HEK293 (cell line): ENCODE measurements at regions of chr5 and their contacts with region 1.

Region 1: DNA sequence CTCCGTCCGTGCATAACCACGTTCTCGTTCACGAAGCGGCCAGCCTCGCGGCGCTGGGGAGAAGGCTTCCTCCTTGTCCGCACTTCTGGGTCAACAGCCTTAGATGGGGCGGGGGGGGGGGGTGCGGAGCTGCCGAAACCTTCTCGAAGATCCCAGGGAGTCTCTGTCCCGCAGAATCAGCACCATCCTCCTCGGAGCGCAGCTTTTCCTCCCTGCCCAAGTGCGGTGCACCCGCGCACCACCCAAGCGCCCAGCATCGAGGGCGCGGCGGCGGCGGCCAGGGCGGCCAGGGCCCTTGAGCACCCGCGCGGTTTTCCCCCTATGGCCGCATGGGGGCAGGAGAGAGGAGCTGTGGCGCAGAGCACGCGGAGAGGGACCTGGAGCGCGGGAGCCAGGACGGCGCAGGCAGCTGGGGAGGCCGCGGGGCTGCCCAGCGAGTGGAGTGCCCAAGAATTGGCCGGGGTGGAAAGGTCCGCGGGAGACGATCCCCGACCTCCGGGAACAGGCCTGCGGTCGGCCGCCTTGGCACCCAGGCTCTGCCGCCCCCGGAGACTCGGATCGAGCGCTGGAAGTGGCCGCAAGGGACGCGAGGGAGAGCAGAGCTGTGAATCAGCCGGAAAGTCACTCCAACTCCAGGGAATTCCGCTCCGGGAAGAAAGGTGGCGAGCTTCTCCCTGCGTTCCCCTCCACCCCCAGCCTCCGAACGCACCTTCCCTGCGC is 43.1 kb downstream of the TMEM174 start:
- H3K4me3 ChIP-seq: peak overlapping the region; percentile 53
- H3K27ac ChIP-seq: peak overlapping the region; percentile 80; the same call in 1 of the 2 replicates
- H3K4me1 ChIP-seq: peaks cover 11% of the 10 kb centered on the region
- CTCF ChIP-seq: peak; percentile 99

Region 2: DNA sequence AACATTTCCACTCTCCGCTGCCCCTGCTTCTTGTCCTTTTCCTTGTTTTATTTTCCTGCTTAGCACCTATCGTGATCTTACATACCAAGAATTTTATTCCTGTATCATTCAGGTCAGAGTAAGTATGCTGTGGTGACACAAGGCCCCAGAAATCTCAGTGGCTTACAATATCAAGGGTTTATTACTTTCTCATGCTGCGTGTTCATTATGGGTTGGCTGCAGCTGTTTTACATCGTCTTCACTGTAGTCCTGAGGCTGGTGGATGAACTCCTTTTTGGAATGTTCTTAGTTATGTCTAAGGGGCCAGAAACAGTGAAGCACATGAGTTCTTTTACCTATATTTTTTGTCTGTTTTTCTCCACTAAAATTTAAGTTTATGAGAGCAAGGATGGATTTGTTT is 209.0 kb before region 1 on chr5:
- CTCF ChIA-PET with region 1: no interaction called
- POLR2A ChIA-PET with region 1: no interaction called
- H3K4me3 ChIP-seq: no peak overlapping the region
- H3K27ac ChIP-seq: no peak overlapping the region
- H3K4me1 ChIP-seq: no peaks in the 10 kb centered on the region
- CTCF ChIP-seq: no peak

Region 3: GRCh38 chr5:73158313-73158712 is 57.7 kb before region 1 on chr5:
- CTCF ChIA-PET with region 1: no interaction called
- POLR2A ChIA-PET with region 1: no interaction called
- H3K4me3 ChIP-seq: no peak overlapping the region
- H3K27ac ChIP-seq: no peak overlapping the region
- H3K4me1 ChIP-seq: no peaks in the 10 kb centered on the region
- CTCF ChIP-seq: no peak

Region 4: GRCh38 chr5:73170522-73170921 is 45.5 kb before region 1 on chr5:
- CTCF ChIA-PET with region 1: interaction called, 12 read pairs
- POLR2A ChIA-PET with region 1: no interaction called
- H3K4me3 ChIP-seq: no peak overlapping the region
- H3K27ac ChIP-seq: no peak overlapping the region
- H3K4me1 ChIP-seq: no peaks in the 10 kb centered on the region
- CTCF ChIP-seq: no peak

Region 5: DNA sequence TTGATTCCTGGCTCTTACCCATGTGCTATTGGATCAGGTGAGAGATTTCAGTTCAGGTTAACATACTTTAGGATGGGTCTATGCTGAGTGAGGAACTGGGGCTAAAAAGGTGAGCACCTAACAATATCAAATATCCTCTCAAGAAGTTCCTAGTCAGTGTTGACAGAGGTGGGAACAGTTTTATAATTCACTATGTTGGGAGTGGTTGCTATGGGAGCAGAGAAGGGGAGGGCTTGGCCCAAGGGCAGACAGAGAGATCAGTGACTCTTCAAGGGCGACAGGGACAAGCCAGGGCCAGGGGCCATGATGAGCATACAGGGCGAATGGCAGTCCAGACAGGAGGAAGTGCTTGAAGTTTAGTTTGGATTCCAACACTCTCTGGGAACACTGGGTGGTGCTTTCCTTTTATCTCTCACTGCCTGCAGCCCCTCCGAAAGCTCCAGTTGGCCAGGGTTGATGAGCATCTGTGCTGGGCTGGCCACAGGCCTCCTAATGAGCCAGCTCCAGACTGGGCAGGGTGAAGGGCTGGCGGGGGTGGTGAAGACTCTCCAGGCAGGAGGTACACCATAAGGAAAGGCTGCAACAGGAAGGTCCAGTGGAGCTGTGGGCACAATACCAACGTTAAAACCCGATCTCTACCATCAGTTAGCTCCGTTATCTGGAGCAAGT is 68.2 kb after region 1 on chr5:
- CTCF ChIA-PET with region 1: interaction called, 13 read pairs
- POLR2A ChIA-PET with region 1: interaction called, 4 read pairs
- H3K4me3 ChIP-seq: no peak overlapping the region
- H3K27ac ChIP-seq: no peak overlapping the region
- H3K4me1 ChIP-seq: peaks cover 27% of the 10 kb centered on the region
- CTCF ChIP-seq: no peak

Region 6: DNA sequence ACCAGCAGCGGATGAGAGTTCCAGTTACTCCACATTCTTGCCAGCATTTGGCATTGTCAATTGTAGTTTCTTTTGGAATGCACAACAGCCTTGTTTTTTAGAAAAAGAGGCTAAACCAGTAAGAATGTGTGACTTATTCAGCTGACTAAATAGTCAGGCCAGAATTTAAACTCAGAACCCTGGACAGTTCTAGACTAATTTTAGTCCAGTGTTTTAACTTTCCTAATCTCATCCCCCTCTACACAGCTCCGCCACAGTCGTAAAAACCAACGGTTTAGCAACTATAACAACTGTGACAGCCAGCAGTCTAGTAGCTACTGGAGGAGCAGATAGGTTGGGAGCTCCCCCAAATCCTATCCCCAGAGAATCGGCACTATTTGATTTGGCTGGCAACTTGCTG is 128.8 kb after region 1 on chr5:
- CTCF ChIA-PET with region 1: interaction called, 12 read pairs
- POLR2A ChIA-PET with region 1: no interaction called
- H3K4me3 ChIP-seq: no peak overlapping the region
- H3K27ac ChIP-seq: no peak overlapping the region
- H3K4me1 ChIP-seq: no peaks in the 10 kb centered on the region
- CTCF ChIP-seq: no peak

Region 7: DNA sequence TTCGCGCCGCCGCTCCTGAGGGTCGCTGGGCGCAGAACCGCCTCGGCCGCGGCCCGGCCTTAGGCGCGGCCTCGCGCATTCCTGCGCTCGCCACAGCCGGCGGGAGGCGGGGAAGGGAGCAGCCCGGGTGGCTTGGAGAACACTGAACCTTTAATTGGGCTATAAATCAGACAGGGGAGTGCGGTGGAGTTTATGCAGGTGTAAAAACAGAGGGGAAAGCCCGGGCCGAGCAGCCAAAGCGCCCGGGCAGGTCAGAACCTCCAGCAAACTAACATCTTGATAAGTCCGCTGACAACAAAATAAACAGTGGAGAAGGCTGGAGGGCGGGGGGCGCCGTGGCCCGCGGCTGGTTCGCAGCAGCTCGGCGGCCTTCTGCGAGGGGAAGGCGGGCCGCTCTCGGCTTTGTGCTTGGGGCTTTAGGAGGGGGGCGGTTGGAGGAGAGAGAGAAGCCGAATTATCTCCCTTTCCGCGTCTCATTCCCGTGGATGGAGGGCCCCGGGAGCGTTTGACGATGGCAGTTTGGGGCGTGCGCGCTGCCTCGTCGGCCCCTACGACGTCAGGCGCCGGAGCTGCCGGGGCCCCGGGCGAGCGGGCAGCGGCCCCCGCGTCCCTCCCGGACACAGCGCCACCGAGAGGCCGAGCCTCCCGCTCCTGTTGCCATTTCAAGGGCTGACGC is 221.2 kb after region 1 on chr5:
- CTCF ChIA-PET with region 1: interaction called, 15 read pairs
- POLR2A ChIA-PET with region 1: no interaction called
- H3K4me3 ChIP-seq: peak overlapping the region; percentile 44
- H3K27ac ChIP-seq: peak overlapping the region; percentile 99
- H3K4me1 ChIP-seq: peaks cover 40% of the 10 kb centered on the region
- CTCF ChIP-seq: peak; percentile 93

Region 8: DNA sequence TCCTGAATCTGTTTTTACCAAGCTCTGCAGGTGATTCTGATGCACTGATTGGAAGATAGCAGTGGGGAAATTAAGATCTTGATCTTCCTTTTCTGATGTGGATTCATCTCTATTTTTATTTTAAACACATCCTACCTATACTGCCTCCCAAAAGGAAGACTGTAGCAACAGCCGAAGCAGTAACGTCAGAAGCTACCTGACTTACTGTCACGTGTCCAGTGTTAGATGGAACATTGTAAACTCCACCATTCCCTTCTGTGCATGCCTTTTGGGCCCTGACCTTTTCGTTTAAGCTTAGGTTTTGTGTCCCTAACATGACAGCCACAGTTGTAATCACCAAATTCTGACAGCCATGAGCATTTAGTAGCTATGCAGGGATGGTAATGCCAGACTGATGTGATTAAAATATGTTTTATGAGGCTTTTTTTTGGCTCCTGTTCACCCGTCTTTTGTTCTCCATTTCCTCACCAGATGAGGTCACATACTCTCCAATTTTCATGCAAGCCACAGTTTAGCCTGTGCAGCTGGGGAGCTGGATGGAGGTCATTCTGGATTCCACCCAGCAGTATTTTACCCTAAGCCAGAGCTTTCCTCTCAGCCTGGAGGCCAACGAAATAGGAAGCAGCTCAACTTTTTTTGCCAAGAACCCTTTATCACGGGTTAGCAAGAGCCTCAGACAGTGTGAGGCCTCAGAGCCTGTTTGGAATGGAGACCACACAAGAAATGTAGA is 248.1 kb after region 1 on chr5:
- CTCF ChIA-PET with region 1: no interaction called
- POLR2A ChIA-PET with region 1: no interaction called
- H3K4me3 ChIP-seq: no peak overlapping the region
- H3K27ac ChIP-seq: no peak overlapping the region
- H3K4me1 ChIP-seq: no peaks in the 10 kb centered on the region
- CTCF ChIP-seq: no peak